A549 (cell line): ENCODE measurements at regions of chr3 and their contacts with region 1.

Region 1: GRCh38 chr3:126752303-126752842 is 48.3 kb downstream of the CHCHD6 start:
- DNase-seq: peak; percentile 49 to 65
- ATAC-seq: peak; percentile 98 to 99
- H3K4me3 ChIP-seq: no peak overlapping the region
- H3K27ac ChIP-seq: peak overlapping the region; percentile 44 to 74; a peak in 2 of 6 replicates
- H3K4me1 ChIP-seq: peaks cover 14% of the 10 kb centered on the region; the same call in 2 of the 3 replicates
- CTCF ChIP-seq: peak; percentile 77
- EP300 ChIP-seq: no peak
- POLR2A ChIP-seq: no peak
- RAD21 ChIP-seq: peak; percentile 90 to 91

Region 2: GRCh38 chr3:124986158-124987143 is 1765.9 kb before region 1 on chr3:
- CTCF ChIA-PET with region 1: no interaction called
- POLR2A ChIA-PET with region 1: no interaction called
- DNase-seq: peak; percentile 72 to 78
- ATAC-seq: peak; percentile 95 to 96
- H3K4me3 ChIP-seq: no peak overlapping the region
- H3K27ac ChIP-seq: peak overlapping the region; percentile 77 to 93
- H3K4me1 ChIP-seq: peaks cover 27% of the 10 kb centered on the region
- CTCF ChIP-seq: peak; percentile 66
- EP300 ChIP-seq: no peak
- POLR2A ChIP-seq: no peak
- RAD21 ChIP-seq: peak; percentile 62 to 66

Region 3: DNA sequence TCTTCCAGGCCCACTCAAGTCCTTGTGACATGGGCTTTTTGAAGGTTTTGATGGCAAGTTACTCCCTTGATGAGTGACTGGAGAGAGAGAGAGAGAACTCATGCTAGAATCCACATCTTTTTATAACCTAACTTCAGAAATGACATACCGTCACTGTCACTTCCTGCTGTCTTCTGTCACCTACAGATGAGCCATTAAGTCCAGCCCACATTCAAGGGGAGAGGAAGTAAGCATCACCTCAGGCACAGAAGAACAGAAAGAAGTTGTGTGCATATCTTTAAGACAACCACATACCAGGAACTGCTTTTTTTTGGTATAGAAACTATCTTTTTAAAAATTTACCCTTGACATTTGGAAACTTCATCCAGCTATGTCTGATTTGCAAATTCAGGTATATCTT is 80.9 kb before region 1 on chr3:
- CTCF ChIA-PET with region 1: no interaction called
- POLR2A ChIA-PET with region 1: no interaction called
- DNase-seq: no peak
- ATAC-seq: no peak
- H3K4me3 ChIP-seq: no peak overlapping the region
- H3K27ac ChIP-seq: no peak overlapping the region
- H3K4me1 ChIP-seq: no peaks in the 10 kb centered on the region
- CTCF ChIP-seq: no peak
- EP300 ChIP-seq: no peak
- POLR2A ChIP-seq: no peak
- RAD21 ChIP-seq: no peak

Region 4: GRCh38 chr3:126721246-126721645 is 31.1 kb before region 1 on chr3:
- CTCF ChIA-PET with region 1: no interaction called
- POLR2A ChIA-PET with region 1: no interaction called
- DNase-seq: no peak
- ATAC-seq: no peak
- H3K4me3 ChIP-seq: no peak overlapping the region
- H3K27ac ChIP-seq: no peak overlapping the region
- H3K4me1 ChIP-seq: no peaks in the 10 kb centered on the region
- CTCF ChIP-seq: no peak
- EP300 ChIP-seq: no peak
- POLR2A ChIP-seq: no peak
- RAD21 ChIP-seq: no peak

Region 5: DNA sequence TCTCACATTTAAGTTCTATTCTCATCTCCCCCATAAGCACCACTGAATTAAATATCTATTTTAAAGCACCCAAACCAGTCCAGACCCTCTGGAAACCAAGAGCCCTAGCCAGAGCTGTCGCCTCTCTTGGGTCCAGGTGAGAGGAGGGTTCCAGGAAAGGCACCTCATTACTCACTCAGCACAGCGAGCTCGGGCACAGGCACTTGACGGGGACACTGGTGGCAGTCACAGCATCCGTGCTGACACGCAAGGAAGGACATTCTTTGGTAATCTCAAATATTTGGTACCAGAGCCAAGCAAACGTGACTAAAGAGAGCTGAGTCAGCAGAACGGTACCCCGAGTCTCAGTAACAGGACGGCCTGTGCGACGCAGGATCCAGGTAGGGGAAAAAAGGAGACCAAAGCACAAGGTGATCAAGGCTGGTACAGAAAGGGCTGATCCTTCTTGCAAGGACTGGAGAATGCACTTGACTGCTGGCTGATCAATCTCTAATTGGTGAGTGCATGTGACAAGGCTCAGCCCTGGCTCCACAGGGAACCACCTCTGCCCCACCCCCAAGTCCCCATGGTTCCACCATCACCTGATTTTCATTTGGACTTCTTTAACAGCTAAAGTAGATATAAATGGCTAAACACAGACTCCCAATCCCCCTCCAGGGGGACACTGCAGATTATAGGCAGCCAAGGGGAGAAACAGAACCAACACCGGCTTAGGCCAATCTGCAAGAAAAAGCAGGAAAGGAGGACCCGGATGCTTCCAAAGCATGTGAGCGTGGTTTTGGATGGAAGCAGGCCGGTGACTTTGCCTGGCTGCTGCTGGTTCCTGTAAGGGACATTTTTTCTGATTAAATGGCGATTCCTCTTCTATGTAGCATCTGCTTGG is 13.1 kb after region 1 on chr3:
- CTCF ChIA-PET with region 1: interaction called, 11 read pairs
- POLR2A ChIA-PET with region 1: no interaction called
- DNase-seq: no peak
- ATAC-seq: no peak
- H3K4me3 ChIP-seq: no peak overlapping the region
- H3K27ac ChIP-seq: no peak overlapping the region
- H3K4me1 ChIP-seq: no peaks in the 10 kb centered on the region
- CTCF ChIP-seq: no peak
- EP300 ChIP-seq: no peak
- POLR2A ChIP-seq: no peak
- RAD21 ChIP-seq: no peak

Region 6: DNA sequence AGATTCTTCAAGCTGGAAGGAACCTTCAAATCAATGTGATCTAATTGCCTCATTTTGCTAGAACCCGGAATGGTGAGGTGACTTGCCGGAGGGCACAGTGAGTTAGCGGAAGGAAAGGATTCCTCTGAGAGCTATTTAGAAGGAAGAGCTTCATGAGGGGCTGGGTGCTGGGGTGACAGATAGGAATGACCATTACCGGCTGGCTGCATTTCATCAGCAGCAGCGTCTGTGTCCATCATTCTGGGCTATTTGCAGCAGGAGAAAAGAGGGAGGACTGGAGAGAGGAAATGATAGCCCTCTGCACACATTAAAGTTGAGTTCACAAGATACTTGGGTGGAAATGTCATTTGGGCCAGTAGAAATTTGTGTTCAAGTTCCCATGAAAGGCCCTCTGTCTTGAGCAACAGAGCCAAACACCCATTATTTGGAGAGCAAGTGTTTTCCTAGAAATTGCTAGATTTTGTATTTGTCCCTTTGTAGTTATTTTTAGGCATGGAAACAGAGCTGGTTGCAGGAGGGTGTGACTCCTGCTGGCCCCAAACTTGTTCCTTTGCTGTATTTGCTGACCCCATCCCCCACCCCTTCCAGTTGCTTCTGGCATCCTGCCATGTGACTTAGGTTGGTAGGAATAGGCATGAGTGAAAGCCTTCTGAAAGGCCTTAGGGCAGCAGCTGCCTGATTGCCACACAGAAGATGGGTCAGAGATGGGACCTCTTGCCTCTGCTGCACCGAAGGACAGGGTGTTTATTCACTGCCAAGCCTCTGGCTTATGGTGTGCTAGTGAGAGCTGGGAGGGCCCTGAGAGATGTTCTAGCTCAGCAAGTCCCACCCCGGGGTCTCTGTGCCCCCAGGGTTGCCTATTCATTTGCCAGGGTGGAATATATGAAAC is 143.0 kb after region 1 on chr3:
- CTCF ChIA-PET with region 1: interaction called, 12 read pairs
- POLR2A ChIA-PET with region 1: no interaction called
- DNase-seq: peak; percentile 10 to 39
- ATAC-seq: peak; percentile 69 to 70; a peak in 5 of 6 replicates
- H3K4me3 ChIP-seq: no peak overlapping the region
- H3K27ac ChIP-seq: peak overlapping the region in 1 of 2 experiments; percentile 64; a peak in 3 of 6 replicates
- H3K4me1 ChIP-seq: peaks cover 29% of the 10 kb centered on the region
- CTCF ChIP-seq: no peak
- EP300 ChIP-seq: no peak
- POLR2A ChIP-seq: no peak
- RAD21 ChIP-seq: no peak

Region 7: DNA sequence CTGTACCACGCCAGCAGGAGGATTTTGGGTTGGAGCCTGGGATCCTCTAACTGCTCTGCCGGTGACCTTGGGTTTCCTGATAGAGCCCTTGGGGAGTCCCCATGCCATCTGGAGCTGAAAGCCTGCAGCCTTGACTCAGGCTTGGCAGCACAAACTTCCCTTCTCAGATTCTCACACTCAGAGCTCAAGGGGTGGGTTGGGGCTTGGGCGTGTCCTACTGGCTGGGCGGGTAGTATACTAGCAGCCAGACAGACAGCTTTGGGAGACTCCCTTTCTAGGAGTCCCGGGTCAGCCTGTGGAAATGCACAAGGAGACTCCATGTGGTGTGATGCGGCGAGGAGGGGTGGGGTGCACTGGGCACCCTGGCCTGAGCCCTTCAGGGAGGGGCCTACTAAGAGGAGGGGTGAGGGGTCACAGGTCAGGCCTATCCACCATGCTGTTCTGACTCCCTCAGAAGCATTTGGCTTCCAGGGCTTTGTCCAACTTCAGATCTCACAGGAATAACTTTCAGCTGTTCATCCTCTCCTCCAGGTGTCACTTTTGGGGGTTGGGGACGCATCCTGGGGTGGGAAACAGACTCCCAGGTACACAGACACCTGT is 208.9 kb after region 1 on chr3:
- CTCF ChIA-PET with region 1: interaction called, 39 read pairs
- POLR2A ChIA-PET with region 1: no interaction called
- DNase-seq: no peak
- ATAC-seq: no peak
- H3K4me3 ChIP-seq: no peak overlapping the region
- H3K27ac ChIP-seq: no peak overlapping the region; a peak in 1 of 6 replicates
- H3K4me1 ChIP-seq: peaks cover 18% of the 10 kb centered on the region
- CTCF ChIP-seq: no peak
- EP300 ChIP-seq: no peak
- POLR2A ChIP-seq: no peak
- RAD21 ChIP-seq: no peak

Region 8: DNA sequence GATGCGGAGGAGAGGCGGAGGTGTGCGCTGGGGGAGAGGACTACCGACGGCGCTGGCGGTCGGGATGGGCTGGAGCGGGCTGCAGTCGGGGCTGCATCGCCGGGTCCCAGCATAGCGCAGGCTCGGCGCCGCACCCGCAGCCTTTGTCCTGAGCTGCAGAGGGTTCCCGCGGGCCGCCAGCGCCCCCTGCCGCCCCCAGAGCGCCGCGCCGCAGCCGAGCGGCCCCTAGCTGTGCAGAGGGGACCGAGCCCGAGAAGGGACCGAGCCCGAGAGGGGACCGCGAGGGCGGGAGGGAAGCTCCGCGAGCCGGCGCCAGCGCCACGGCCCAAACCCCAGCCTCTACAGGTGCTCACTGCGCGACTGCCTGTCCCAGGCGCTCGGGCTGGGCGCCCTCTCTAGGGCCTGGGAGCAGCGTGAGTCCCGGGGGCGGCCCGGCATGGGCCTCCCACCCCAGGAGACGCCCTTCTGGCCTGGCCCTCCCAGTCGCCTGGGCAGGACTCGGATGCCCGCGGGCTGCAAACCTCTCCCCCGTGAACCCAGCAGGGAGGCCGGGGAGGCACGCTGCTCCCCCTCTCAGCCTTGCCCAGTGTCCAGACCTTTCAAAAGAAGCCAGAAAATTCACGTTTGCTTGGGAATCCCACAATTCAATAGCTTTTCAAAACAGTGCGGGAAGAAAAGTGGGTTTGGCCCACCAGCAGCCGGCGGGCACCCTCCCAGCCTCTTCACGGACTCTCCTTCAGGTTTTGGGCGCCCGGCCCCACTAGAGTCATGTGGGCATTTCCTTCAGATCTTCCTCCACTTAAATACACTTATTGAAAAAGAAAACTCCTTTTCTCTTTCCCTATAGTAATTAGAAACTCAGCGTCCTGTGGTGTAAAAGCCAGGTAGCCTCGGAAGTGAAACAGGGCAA is 703.4 kb after region 1 on chr3:
- CTCF ChIA-PET with region 1: interaction called, 18 read pairs
- POLR2A ChIA-PET with region 1: no interaction called
- DNase-seq: peak; percentile 45 to 79
- ATAC-seq: peak; percentile 93 to 99
- H3K4me3 ChIP-seq: peak overlapping the region; percentile 32; the same call in 2 of the 3 replicates
- H3K27ac ChIP-seq: peak overlapping the region; percentile 40 to 74; a peak in 4 of 6 replicates
- H3K4me1 ChIP-seq: no peaks in the 10 kb centered on the region
- CTCF ChIP-seq: peak; percentile 88
- EP300 ChIP-seq: no peak
- POLR2A ChIP-seq: no peak
- RAD21 ChIP-seq: peak; percentile 72 to 95